A549 (cell line): ENCODE measurements at regions of chr7 and their contacts with region 1.

Region 1: GRCh38 chr7:5363729-5364128 is 59.9 kb downstream of the TNRC18 start:
- DNase-seq: no peak
- ATAC-seq: no peak
- H3K4me3 ChIP-seq: no peak overlapping the region
- H3K27ac ChIP-seq: no peak overlapping the region
- H3K4me1 ChIP-seq: no peaks in the 10 kb centered on the region
- CTCF ChIP-seq: no peak
- EP300 ChIP-seq: no peak
- POLR2A ChIP-seq: no peak
- RAD21 ChIP-seq: no peak

Region 2: GRCh38 chr7:5315761-5316160 is 48.0 kb before region 1 on chr7:
- CTCF ChIA-PET with region 1: interaction called, 10 read pairs
- POLR2A ChIA-PET with region 1: no interaction called
- DNase-seq: no peak
- ATAC-seq: no peak
- H3K4me3 ChIP-seq: no peak overlapping the region
- H3K27ac ChIP-seq: no peak overlapping the region
- H3K4me1 ChIP-seq: no peaks in the 10 kb centered on the region
- CTCF ChIP-seq: no peak
- EP300 ChIP-seq: no peak
- POLR2A ChIP-seq: no peak
- RAD21 ChIP-seq: no peak

Region 3: DNA sequence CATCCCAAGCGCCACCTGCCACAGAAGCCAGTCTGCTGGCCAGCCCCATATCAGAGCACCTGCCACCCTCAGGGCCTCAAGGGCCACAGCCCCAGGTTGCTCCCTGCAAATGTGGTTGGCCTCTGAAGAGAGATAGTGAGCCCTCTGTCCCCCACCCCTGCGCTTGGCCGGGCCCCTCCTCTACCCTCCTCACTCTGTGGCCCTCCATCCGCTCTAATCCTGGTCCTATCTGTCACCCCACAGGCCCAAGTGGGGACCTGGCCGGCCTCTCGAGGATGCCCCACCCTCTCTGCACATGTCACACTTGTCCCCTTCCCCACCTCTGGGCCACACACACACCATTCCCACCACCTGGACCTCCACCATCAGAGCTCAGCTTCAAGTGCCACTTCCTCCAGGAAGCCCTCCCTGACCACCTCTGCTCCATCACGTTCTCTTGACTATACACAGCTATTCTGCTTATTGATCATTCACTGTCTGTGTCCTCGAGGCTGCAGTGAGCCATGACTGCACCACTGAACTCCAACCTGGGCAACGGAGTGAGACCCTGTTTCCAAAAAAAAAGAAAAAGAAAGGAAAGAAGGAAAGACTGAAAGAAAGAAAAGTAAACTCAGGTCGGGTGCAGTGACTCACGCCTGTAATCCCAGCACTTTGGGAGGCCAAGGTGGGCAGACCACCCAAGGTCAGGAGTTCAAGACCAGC is 17.5 kb after region 1 on chr7:
- CTCF ChIA-PET with region 1: interaction called, 37 read pairs
- POLR2A ChIA-PET with region 1: no interaction called
- DNase-seq: no peak
- ATAC-seq: no peak
- H3K4me3 ChIP-seq: no peak overlapping the region
- H3K27ac ChIP-seq: no peak overlapping the region
- H3K4me1 ChIP-seq: peaks cover 6% of the 10 kb centered on the region; the same call in 1 of the 3 replicates
- CTCF ChIP-seq: no peak
- EP300 ChIP-seq: no peak
- POLR2A ChIP-seq: no peak
- RAD21 ChIP-seq: no peak

Region 4: GRCh38 chr7:5429857-5430611 is 66.3 kb after region 1 on chr7:
- CTCF ChIA-PET with region 1: interaction called, 14 read pairs
- POLR2A ChIA-PET with region 1: no interaction called
- DNase-seq: no peak
- ATAC-seq: no peak
- H3K4me3 ChIP-seq: no peak overlapping the region
- H3K27ac ChIP-seq: peak overlapping the region in 1 of 2 experiments; percentile 5; a peak in 1 of 6 replicates
- H3K4me1 ChIP-seq: peaks cover 8% of the 10 kb centered on the region; the same call in 2 of the 3 replicates
- CTCF ChIP-seq: no peak
- EP300 ChIP-seq: no peak
- POLR2A ChIP-seq: no peak
- RAD21 ChIP-seq: no peak

Region 5: DNA sequence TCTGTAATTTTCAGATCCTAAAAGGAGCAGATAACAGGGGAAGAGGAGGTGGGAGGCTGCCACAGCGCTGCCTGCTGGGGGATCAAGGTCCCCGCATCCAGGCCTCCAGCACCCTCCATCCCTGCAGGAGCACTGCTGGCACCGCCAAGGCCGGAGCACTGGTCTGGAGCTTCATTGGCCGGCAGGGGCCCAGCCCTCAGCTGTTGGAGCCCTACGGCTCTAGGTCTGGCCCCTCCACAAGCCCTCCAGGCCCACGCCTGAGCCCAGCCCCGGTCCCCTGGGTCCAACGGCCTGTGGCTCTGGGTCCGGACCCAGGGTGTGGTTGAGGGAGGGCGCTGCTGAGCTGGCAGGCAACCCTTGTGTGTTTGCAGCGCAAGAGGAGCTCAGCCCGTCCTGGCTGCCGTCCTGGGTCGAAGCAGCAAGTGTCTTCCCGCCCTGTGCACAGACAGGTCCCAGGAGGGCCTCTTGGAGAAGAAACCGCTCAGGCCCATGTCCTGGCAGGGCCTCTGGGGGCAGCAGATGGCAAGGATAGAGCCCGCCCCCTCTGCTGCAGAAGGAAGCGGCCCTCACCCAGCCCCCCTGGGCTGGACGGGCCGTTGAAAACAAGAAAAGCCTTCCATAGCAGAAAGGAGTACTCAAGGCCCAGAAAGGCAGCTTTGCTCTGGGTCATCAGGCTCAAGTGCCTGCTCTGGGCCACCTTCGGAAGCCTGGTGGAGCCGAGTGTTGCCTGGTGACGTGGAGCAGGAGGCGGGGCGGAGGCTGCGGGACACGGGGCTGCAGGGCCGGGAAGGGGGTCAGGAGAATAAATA is 114.2 kb after region 1 on chr7:
- CTCF ChIA-PET with region 1: interaction called, 15 read pairs
- POLR2A ChIA-PET with region 1: no interaction called
- DNase-seq: peak in 1 of 2 experiments; percentile 35
- ATAC-seq: peak; percentile 55 to 76
- H3K4me3 ChIP-seq: no peak overlapping the region
- H3K27ac ChIP-seq: no peak overlapping the region
- H3K4me1 ChIP-seq: no peaks in the 10 kb centered on the region
- CTCF ChIP-seq: no peak
- EP300 ChIP-seq: no peak
- POLR2A ChIP-seq: no peak
- RAD21 ChIP-seq: no peak